ENCODE measurements at regions of chr2 and their contacts with region 1.

Region 1: GRCh38 chr2:173027181-173028128 is 48.2 kb upstream of the MAP3K20 start:
- DNase-seq: peak; percentile 55 to 79 (median 59)
- H3K4me3 ChIP-seq: no peak overlapping the region
- H3K4me3 Mint-ChIP-seq: no peak overlapping the region
- H3K27ac ChIP-seq: no peak overlapping the region
- H3K27ac Mint-ChIP-seq: no peak overlapping the region
- H3K4me1 ChIP-seq: no peaks in the 10 kb centered on the region
- H3K4me1 Mint-ChIP-seq: peaks cover 0 to 3% (median 3%) of the 10 kb centered on the region in 3 donors
- H3K27me3 ChIP-seq: no peaks in the 10 kb centered on the region
- H3K27me3 Mint-ChIP-seq: peaks cover 0 to 13% of the 10 kb centered on the region in 2 donors

Region 2: DNA sequence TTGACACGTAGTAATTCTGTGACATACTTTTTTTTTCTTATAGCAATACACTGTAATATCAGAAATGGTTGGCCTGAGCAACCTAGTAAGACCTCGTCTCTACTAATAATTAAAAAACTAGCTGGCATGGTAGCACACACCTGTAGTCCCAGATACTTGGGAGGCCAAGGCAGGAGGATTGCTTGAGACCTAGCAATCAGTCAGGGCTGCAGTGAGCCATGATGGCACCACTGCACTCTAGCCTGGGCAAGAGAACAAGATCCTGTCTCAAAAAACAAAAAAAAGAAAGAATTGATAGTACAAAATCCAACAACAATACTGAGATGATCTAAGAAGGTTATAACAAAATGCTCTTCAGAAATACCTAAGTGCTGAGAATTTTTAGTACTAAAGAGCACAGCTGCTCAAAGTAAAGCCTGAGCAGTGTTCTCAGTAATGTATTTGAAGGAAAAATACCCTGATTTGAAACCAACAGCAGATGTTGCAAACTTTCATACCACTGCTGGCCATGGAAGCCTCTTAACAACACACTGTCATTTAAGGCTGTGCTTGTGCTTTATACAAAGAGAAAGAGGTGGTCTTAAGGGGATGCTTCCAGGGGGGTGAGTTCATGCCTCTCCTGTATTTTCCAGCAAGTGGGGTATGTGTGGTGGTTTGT is 194.6 kb after region 1 on chr2:
- CTCF ChIA-PET with region 1: interaction called, 11 read pairs
- POLR2A ChIA-PET with region 1: no interaction called
- DNase-seq: no peak
- H3K4me3 ChIP-seq: no peak overlapping the region
- H3K4me3 Mint-ChIP-seq: no peak overlapping the region
- H3K27ac ChIP-seq: no peak overlapping the region
- H3K27ac Mint-ChIP-seq: no peak overlapping the region
- H3K4me1 ChIP-seq: no peaks in the 10 kb centered on the region
- H3K4me1 Mint-ChIP-seq: peaks cover 4 to 7% (median 5%) of the 10 kb centered on the region in 3 donors
- H3K27me3 ChIP-seq: no peaks in the 10 kb centered on the region
- H3K27me3 Mint-ChIP-seq: peaks cover 0 to under 1% of the 10 kb centered on the region in 2 donors

Measured in CD8-positive, alpha-beta memory T cell (primary cell).